ENCODE measurements at regions of chr10 and their contacts with region 1.

Region 1: GRCh38 chr10:33115738-33116719 is 158.0 kb upstream of the ITGB1 start:
- DNase-seq: peak in 4 of 14 experiments; percentile 51 to 74 (median 66)
- ATAC-seq: peak; percentile 28
- H3K4me3 ChIP-seq: peak overlapping the region; percentile 50
- H3K4me3 Mint-ChIP-seq: peak overlapping the region; percentile 70
- H3K27ac ChIP-seq: peak overlapping the region; percentile 38 to 79
- H3K27ac Mint-ChIP-seq: peak overlapping the region; percentile 88
- H3K4me1 ChIP-seq: peaks cover 72% of the 10 kb centered on the region
- H3K4me1 Mint-ChIP-seq: peaks cover 91% of the 10 kb centered on the region
- H3K27me3 ChIP-seq: no peaks in the 10 kb centered on the region
- H3K27me3 Mint-ChIP-seq: no peaks in the 10 kb centered on the region
- CTCF ChIP-seq: peak; percentile 47

Region 2: DNA sequence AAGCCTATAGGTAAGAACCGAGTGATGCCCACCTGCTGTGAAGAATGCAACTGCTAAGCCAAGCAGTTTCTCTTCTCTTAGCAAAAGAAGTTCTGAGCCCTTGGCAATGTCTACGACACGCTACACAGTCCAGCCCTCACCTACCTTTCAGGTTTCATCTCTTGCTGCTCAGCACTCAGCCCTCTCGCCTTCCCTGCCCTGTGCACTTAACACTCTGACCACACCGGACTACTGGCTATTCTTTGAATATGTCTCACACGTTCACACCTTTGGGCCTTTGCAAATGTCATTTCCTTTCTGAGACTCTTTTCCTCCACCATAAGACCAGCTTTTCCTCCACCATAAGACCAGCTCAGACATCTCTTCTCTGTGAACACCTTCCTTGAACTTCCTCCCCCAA is 91.0 kb before region 1 on chr10:
- CTCF ChIA-PET with region 1: no interaction called
- POLR2A ChIA-PET with region 1: interaction called, 23 read pairs
- intact Hi-C with region 1: loop called (anchors 5 to 10 kb)
- DNase-seq: no peak
- ATAC-seq: no peak
- H3K4me3 ChIP-seq: no peak overlapping the region
- H3K4me3 Mint-ChIP-seq: no peak overlapping the region
- H3K27ac ChIP-seq: no peak overlapping the region
- H3K27ac Mint-ChIP-seq: no peak overlapping the region
- H3K4me1 ChIP-seq: peaks cover 41% of the 10 kb centered on the region
- H3K4me1 Mint-ChIP-seq: peaks cover 49% of the 10 kb centered on the region
- H3K27me3 ChIP-seq: no peaks in the 10 kb centered on the region
- H3K27me3 Mint-ChIP-seq: no peaks in the 10 kb centered on the region
- CTCF ChIP-seq: no peak

Region 3: DNA sequence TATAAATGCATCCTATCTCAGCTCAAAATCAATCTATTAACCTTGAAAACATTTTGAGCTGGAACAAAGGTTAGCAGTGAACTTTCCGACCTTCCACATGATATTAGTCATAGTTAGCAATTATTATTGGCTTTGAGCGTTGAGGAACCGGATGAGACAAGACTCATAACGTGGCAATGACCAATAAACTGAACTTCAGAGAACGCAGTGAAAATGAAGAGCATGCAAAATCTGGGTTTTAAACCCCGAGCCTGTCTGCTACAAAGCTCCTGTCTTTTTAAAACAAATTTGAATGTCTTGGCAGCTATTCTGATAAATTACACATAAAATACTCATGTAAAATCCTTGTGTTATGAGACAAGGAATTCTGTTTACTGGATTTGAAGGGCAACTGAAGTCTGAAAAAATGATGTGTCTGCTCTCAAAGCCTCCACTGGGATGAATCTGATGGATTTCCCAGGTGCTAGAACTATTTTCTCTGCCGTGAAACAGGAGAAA is 83.3 kb before region 1 on chr10:
- CTCF ChIA-PET with region 1: no interaction called
- POLR2A ChIA-PET with region 1: interaction called, 23 read pairs
- intact Hi-C with region 1: loop called in 1 of 2 experiments (anchors 10 kb)
- DNase-seq: peak in 1 of 14 experiments; percentile 34
- ATAC-seq: no peak
- H3K4me3 ChIP-seq: no peak overlapping the region
- H3K4me3 Mint-ChIP-seq: no peak overlapping the region
- H3K27ac ChIP-seq: no peak overlapping the region
- H3K27ac Mint-ChIP-seq: peak overlapping the region; percentile 29
- H3K4me1 ChIP-seq: peaks cover 40% of the 10 kb centered on the region
- H3K4me1 Mint-ChIP-seq: peaks cover 20% of the 10 kb centered on the region
- H3K27me3 ChIP-seq: no peaks in the 10 kb centered on the region
- H3K27me3 Mint-ChIP-seq: no peaks in the 10 kb centered on the region
- CTCF ChIP-seq: no peak

Region 4: DNA sequence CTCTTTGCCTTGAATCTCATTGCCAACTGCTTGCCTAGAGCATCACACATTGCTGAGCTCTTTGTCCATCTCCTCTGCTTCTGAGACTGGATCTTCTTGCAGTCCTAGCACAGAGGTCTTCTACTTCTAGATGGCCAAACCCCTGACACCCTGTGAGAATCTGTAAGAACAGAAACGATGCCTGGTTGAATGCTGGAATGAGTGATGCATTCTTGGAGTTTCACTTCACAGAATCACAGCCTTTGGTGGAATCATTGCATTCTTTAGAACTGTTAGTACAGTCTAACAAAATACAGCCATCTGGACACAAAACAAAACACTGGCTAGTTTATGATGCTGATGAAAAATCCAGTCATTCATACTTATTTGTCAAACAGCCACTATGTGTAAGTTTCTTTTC is 16.3 kb before region 1 on chr10:
- CTCF ChIA-PET with region 1: interaction called, 5 read pairs
- POLR2A ChIA-PET with region 1: interaction called, 21 read pairs
- intact Hi-C with region 1: no loop called
- DNase-seq: no peak
- ATAC-seq: no peak
- H3K4me3 ChIP-seq: no peak overlapping the region
- H3K4me3 Mint-ChIP-seq: no peak overlapping the region
- H3K27ac ChIP-seq: peak overlapping the region in 1 of 2 donors; percentile 59
- H3K27ac Mint-ChIP-seq: no peak overlapping the region
- H3K4me1 ChIP-seq: peaks cover 45% of the 10 kb centered on the region
- H3K4me1 Mint-ChIP-seq: peaks cover 44% of the 10 kb centered on the region
- H3K27me3 ChIP-seq: no peaks in the 10 kb centered on the region
- H3K27me3 Mint-ChIP-seq: no peaks in the 10 kb centered on the region
- CTCF ChIP-seq: no peak

Region 5: GRCh38 chr10:33134011-33134751 is 18.2 kb after region 1 on chr10:
- CTCF ChIA-PET with region 1: interaction called, 16 read pairs
- POLR2A ChIA-PET with region 1: interaction called, 42 read pairs
- intact Hi-C with region 1: loop called in 1 of 2 experiments (anchors 2 kb)
- DNase-seq: peak in 13 of 14 experiments; percentile 49 to 90 (median 65)
- ATAC-seq: peak; percentile 67
- H3K4me3 ChIP-seq: no peak overlapping the region
- H3K4me3 Mint-ChIP-seq: peak overlapping the region; percentile 62
- H3K27ac ChIP-seq: peak overlapping the region; percentile 42 to 70
- H3K27ac Mint-ChIP-seq: peak overlapping the region; percentile 93
- H3K4me1 ChIP-seq: peaks cover 91% of the 10 kb centered on the region
- H3K4me1 Mint-ChIP-seq: peaks cover 88% of the 10 kb centered on the region
- H3K27me3 ChIP-seq: no peaks in the 10 kb centered on the region
- H3K27me3 Mint-ChIP-seq: no peaks in the 10 kb centered on the region
- CTCF ChIP-seq: no peak

Region 6: GRCh38 chr10:33180390-33180789 is 64.4 kb after region 1 on chr10:
- CTCF ChIA-PET with region 1: no interaction called
- POLR2A ChIA-PET with region 1: no interaction called
- intact Hi-C with region 1: no loop called
- DNase-seq: no peak
- ATAC-seq: no peak
- H3K4me3 ChIP-seq: no peak overlapping the region
- H3K4me3 Mint-ChIP-seq: no peak overlapping the region
- H3K27ac ChIP-seq: no peak overlapping the region
- H3K27ac Mint-ChIP-seq: no peak overlapping the region
- H3K4me1 ChIP-seq: no peaks in the 10 kb centered on the region
- H3K4me1 Mint-ChIP-seq: no peaks in the 10 kb centered on the region
- H3K27me3 ChIP-seq: no peaks in the 10 kb centered on the region
- H3K27me3 Mint-ChIP-seq: peaks cover 36% of the 10 kb centered on the region
- CTCF ChIP-seq: no peak

Region 7: GRCh38 chr10:33612551-33612950 is 496.5 kb after region 1 on chr10:
- CTCF ChIA-PET with region 1: no interaction called
- POLR2A ChIA-PET with region 1: no interaction called
- intact Hi-C with region 1: no loop called
- DNase-seq: peak in 3 of 14 experiments; percentile 29 to 41 (median 36)
- ATAC-seq: no peak
- H3K4me3 ChIP-seq: no peak overlapping the region
- H3K4me3 Mint-ChIP-seq: no peak overlapping the region
- H3K27ac ChIP-seq: no peak overlapping the region
- H3K27ac Mint-ChIP-seq: no peak overlapping the region
- H3K4me1 ChIP-seq: peaks cover 3% of the 10 kb centered on the region
- H3K4me1 Mint-ChIP-seq: no peaks in the 10 kb centered on the region
- H3K27me3 ChIP-seq: no peaks in the 10 kb centered on the region
- H3K27me3 Mint-ChIP-seq: no peaks in the 10 kb centered on the region
- CTCF ChIP-seq: no peak